Common myeloid progenitor, CD34-positive (primary cell): ENCODE measurements at regions of chr17 and their contacts with region 1.

Region 1: DNA sequence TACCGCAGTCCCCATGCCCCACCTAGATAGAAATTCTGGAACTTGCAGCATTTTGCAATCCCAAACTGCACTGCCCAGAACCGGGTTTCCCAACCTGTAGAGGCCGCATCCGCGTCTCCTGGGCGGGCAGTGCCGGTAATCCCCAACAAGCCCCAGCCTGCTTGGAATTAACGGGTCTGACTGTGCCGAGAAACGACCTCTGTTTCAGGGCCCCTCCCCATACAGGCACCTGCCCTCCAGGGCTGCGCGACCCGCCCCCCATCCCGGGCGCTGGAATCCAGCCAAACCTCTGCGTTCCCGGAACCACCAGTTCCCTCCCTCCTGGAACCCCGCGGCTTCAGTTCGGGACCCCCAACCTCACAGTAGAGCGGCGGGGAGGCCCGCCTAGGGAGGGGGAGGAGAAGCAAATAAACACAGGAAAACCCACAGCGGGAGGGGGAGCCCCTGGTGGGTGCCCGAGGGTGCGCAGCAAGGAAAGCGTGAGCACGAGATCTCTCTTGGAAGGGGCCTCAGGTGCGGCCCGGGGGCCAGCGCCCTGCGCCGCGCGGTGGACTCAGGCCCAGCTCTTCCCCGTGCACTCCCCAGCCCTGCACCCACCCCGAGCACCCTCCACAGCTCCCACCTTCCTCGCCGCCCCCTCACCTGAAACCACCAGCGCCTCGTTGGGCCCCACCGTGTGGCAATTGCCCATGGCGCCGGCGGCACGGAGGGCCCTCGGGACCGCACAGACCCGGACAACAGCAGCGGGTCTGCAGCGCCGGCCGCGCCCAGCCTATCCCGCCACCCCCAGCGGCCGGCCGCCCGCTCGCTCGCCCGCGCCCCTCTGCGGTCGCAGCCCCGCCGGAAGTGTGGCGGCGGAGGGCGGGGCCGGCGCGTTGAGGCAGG is at the start of gene FLOT2:
- DNase-seq: peak; percentile 42 to 74 (median 69)
- H3K4me3 ChIP-seq: peak within 1 kb of the TSS; percentile 75 to 90 (median 85)
- H3K27ac ChIP-seq: peak within 1 kb of the TSS; percentile 58 to 86
- H3K4me1 ChIP-seq: peaks cover 22 to 62% (median 55%) of the 10 kb centered on the region in 4 experiments
- H3K27me3 ChIP-seq: no peaks in the 10 kb centered on the region

Region 2: DNA sequence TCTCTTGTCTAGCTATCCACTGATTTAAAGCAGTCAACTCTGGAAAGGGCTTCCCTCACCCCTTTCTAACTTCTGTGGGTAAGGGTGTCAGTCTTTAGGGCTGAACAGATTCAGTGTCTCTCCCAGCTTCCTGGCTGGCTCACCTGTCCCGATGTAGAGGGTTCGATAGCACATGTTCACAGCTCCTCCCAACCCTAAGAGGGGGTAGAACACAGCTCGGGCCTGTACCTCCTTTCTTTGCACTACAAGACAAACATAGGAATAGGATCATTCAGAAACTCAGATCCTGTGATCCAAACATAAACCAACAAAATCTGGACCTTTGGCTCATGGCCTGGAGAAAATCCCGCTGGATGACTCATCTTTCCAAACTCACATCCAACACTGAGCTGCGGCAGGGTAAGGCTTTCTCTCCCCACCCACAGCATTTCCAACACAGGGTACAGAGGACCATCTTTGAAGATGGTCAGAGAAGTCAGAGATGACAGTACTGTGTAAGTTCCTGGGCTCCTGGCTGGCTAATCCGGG is 11.6 kb after region 1 on chr17:
- CTCF ChIA-PET with region 1: interaction called, 19 read pairs
- POLR2A ChIA-PET with region 1: no interaction called
- DNase-seq: no peak
- H3K4me3 ChIP-seq: no peak overlapping the region
- H3K27ac ChIP-seq: peak overlapping the region in 1 of 2 experiments; percentile 18
- H3K4me1 ChIP-seq: no peaks in the 10 kb centered on the region
- H3K27me3 ChIP-seq: no peaks in the 10 kb centered on the region